B cell (primary cell): ENCODE measurements at regions of chr19 and their contacts with region 1.

Region 1: DNA sequence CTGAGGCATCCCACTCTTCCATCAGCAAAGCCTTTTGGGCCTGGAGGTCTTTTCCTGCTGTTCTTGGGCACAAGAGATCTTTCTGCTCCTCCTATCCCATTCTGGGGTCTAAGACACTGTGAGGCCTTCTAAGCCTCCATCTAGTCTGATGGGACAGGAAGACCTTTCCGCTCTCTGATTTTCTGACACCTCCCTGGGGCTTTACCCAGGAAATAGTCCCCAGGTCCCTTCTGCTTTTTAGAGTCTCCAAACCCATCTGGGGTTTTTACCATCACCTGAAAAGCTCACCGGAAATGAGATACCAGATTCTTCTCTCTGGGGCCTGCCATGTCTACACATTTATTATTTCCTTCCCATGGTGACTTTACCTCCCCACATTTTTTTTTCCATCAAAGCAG is 21.1 kb downstream of the CLEC17A start:
- DNase-seq: peak; percentile 89
- ATAC-seq: peak; percentile 90
- H3K4me3 ChIP-seq: peak overlapping the region in 2 of 5 experiments; percentile 22 to 26
- H3K4me3 Mint-ChIP-seq: peak overlapping the region; percentile 67
- H3K27ac ChIP-seq: peak overlapping the region; percentile 85 to 94
- H3K27ac Mint-ChIP-seq: peak overlapping the region; percentile 83
- H3K4me1 ChIP-seq: peaks cover 54% of the 10 kb centered on the region in 2 donors
- H3K4me1 Mint-ChIP-seq: peaks cover 63% of the 10 kb centered on the region
- H3K27me3 ChIP-seq: no peaks in the 10 kb centered on the region
- H3K27me3 Mint-ChIP-seq: no peaks in the 10 kb centered on the region
- CTCF ChIP-seq: no peak

Region 2: DNA sequence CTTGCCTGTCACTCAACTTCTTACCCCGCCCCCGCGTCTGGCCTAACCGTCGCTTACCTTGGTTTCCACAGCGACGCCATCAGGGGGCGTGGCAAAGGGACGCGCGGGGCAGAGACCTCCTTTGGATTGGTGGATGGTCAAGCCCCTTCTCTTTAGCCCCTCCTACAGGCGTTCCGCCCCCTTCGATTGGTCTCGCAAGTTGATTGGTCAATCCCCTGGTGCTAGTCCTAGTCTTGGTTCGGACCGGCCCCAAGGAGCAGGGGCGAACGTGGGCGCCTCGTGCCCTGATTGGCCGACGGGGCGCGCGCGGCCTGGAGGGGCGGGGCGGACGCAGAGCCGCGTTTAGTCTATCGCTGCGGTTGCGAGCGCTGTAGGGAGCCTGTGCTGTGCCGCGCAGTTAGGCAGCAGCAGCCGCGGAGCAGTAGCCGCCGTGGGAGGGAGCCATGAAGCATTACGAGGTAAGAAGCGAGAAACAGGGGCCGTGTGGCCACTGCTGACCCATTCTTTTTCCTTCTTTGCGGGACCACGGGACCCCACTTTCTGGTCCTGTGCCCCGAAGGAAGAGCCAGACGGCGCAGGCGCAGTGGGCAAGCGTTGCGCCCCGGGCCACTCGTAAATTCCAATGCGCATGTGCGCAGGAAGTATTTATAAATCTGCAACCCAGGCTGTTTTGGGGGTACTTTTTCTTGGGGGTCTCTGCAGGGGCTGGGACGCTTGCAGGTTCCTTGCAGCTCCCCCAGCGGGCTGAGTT is 74.6 kb before region 1 on chr19 and contains the start of gene TECR:
- CTCF ChIA-PET with region 1: no interaction called
- POLR2A ChIA-PET with region 1: no interaction called
- intact Hi-C with region 1: no loop called
- DNase-seq: peak; percentile 100
- ATAC-seq: peak; percentile 97
- H3K4me3 ChIP-seq: peak within 1 kb of the TSS; percentile 64 to 95 (median 72)
- H3K4me3 Mint-ChIP-seq: peak within 1 kb of the TSS; percentile 91
- H3K27ac ChIP-seq: peak within 1 kb of the TSS; percentile 56 to 86
- H3K27ac Mint-ChIP-seq: peak within 1 kb of the TSS; percentile 95
- H3K4me1 ChIP-seq: peaks cover 13 to 22% of the 10 kb centered on the region in 2 donors
- H3K4me1 Mint-ChIP-seq: peaks cover 29% of the 10 kb centered on the region
- H3K27me3 ChIP-seq: no peaks in the 10 kb centered on the region
- H3K27me3 Mint-ChIP-seq: no peaks in the 10 kb centered on the region
- CTCF ChIP-seq: no peak
- total RNA-seq, gene TECR: 68.9 and 72.4 TPM in 2 replicates

Region 3: DNA sequence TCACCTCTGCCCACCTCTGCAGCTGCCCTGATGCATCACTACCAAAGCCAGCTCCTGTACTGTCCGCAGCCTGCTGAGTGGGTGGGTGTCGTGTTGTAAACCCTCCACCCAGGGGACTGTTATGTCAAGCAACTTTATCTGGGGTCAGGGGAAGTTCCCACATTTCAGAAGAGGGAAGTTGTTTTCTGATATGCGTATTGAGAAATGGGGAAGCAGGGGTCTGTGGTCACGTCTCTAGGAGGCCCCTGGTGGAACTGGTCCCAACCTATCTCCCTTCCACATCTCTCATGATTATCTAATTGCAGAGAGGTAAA is 10.1 kb after region 1 on chr19:
- CTCF ChIA-PET with region 1: interaction called, 15 read pairs
- POLR2A ChIA-PET with region 1: interaction called, 19 read pairs
- intact Hi-C with region 1: loop called (anchors 1 kb)
- DNase-seq: peak; percentile 91
- ATAC-seq: peak; percentile 88
- H3K4me3 ChIP-seq: peak overlapping the region in 1 of 5 experiments; percentile 38
- H3K4me3 Mint-ChIP-seq: peak overlapping the region; percentile 89
- H3K27ac ChIP-seq: peak overlapping the region; percentile 91 to 92
- H3K27ac Mint-ChIP-seq: peak overlapping the region; percentile 99
- H3K4me1 ChIP-seq: peaks cover 53 to 64% of the 10 kb centered on the region in 2 donors
- H3K4me1 Mint-ChIP-seq: peaks cover 49% of the 10 kb centered on the region
- H3K27me3 ChIP-seq: no peaks in the 10 kb centered on the region
- H3K27me3 Mint-ChIP-seq: no peaks in the 10 kb centered on the region
- CTCF ChIP-seq: peak; percentile 25

Region 4: DNA sequence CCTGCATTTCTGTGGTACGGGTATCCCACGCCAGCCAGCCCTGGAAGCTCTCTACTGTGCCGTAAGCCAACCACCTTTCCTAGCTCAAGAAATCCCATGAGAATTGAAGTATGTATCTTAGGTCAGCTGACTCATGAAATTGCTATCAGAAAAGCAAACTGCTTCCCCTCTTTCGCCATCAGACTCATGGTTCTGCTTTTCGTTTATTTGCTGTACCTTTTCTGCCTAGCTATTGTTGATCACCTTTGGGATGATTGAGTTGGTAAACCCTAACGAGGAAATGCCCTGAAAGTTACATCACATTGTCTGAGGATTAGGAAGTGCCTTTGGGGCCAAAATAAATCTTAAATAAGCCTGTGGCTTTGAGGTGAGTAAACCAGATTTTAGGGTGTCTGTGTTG is 70.8 kb after region 1 on chr19 and contains the start of gene ADGRE3:
- CTCF ChIA-PET with region 1: no interaction called
- POLR2A ChIA-PET with region 1: no interaction called
- intact Hi-C with region 1: no loop called
- DNase-seq: peak; percentile 67
- ATAC-seq: peak; percentile 69
- H3K4me3 ChIP-seq: peak within 1 kb of the TSS in 1 of 5 experiments; percentile 72
- H3K4me3 Mint-ChIP-seq: peak within 1 kb of the TSS; percentile 77
- H3K27ac ChIP-seq: peak within 1 kb of the TSS in 1 of 2 donors; percentile 12
- H3K27ac Mint-ChIP-seq: peak within 1 kb of the TSS; percentile 88
- H3K4me1 ChIP-seq: peaks cover 24 to 31% of the 10 kb centered on the region in 2 donors
- H3K4me1 Mint-ChIP-seq: peaks cover 29% of the 10 kb centered on the region
- H3K27me3 ChIP-seq: no peaks in the 10 kb centered on the region
- H3K27me3 Mint-ChIP-seq: no peaks in the 10 kb centered on the region
- CTCF ChIP-seq: no peak
- total RNA-seq, gene ADGRE3: 0.17 TPM in 1 of 2 replicates, not detected in the other

Region 5: DNA sequence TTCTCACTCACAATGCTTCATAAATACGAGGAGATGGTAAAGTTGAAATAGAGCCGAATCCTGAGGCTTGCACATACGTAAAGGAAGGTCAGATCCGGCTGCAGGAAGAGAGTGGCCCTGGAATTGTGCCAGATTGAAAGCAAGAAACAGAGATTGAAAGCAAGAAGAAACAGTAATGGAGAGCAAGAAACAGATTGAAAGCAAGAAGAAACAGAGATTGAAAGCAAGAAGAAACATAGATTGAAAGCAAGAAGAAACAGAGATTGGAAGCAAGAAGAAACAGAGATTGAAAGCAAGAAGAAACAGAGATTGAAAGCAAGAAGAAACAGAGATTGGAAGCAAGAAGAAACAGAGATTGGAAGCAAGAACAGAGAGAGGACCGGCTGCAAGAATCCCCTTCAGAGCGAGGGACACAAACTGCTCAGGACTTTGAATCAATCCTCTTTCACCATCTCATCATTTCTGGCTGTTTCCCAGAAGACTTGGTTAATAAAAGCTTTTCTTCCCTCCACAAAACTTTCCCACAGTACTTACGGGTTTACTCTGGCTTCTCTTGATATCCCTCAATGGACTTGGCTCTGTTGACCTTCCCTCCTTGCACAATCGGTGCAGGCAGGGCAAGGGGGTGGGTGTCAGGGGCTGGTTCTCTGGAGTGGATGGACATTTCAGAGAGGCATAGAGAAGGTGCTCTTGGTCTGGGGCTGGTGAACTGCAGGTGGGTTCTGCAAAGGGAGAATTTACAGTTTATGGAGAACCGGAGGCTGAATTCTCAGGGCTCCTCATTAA is 205.5 kb after region 1 on chr19:
- CTCF ChIA-PET with region 1: no interaction called
- POLR2A ChIA-PET with region 1: no interaction called
- intact Hi-C with region 1: no loop called
- DNase-seq: no peak
- ATAC-seq: no peak
- H3K4me3 ChIP-seq: no peak overlapping the region
- H3K4me3 Mint-ChIP-seq: no peak overlapping the region
- H3K27ac ChIP-seq: no peak overlapping the region
- H3K27ac Mint-ChIP-seq: no peak overlapping the region
- H3K4me1 ChIP-seq: no peaks in the 10 kb centered on the region
- H3K4me1 Mint-ChIP-seq: no peaks in the 10 kb centered on the region
- H3K27me3 ChIP-seq: no peaks in the 10 kb centered on the region
- H3K27me3 Mint-ChIP-seq: peaks cover 10% of the 10 kb centered on the region
- CTCF ChIP-seq: no peak